AG04450 (cell line): ENCODE measurements at regions of chr15 and their contacts with region 1.

Region 1: DNA sequence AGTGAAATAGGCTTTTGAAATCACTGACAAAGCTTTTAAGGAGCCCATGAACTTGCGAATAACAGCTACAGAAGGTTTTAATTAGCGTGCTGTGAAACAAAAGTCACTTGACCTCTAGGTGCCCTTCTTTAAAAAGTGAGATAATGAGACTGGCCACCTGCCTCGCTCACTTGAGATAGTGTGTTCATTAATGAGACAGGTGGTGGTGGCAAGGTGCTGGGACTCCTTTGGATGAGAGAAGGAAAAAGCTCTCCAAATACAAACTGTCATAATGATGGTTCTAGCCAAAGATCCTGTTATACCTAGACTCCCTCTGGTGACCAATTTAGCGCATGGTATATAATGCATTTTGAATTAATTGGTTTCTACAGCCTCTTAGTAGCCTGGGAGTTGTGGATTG is 22.7 kb upstream of the IREB2 start:
- DNase-seq: no peak
- H3K4me3 ChIP-seq: no peak overlapping the region
- H3K27ac ChIP-seq: no peak overlapping the region
- H3K27me3 ChIP-seq: peaks cover 29% of the 10 kb centered on the region
- CTCF ChIP-seq: peak; percentile 48

Region 2: DNA sequence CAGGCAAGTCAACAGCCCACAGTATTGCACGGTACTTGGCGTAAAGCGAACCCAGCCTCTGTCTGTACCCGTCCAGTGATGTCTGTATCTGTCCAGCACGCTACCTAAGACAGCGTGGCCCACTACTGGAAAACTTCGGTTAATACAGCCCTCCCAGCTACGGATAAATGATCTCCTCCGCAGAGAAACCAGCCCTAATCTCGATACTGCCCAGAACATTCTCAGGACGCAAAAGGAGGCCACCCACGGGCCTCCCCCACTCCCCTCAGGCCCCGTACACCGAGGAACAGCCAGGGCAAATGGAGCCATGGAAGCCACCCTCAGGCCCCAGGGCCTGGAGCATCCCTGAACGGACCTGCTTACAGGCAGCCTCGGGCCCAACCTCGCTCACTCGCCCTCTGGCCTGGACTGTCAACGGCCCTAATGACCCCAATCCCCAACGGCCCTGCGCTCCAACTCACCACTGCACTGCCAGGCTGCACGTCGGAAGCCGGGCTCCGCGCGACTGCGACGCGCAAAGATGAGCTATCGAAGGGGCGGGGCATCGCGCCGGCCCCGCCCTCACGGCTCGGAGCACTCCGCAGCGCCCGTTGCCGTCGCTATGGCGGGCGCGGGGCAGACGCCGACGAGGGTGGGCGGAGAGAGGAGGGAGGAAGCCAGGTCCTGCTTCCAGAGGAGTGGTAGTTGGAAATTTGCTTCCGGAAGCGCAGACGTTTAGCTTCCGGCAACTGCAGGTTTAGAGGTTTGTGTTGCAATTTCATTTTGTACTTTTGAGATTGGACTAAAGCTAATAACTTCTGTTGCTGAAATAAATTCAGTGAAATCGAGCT is 116.0 kb before region 1 on chr15 and contains the start of gene SKIC8:
- CTCF ChIA-PET with region 1: interaction called, 112 read pairs
- POLR2A ChIA-PET with region 1: interaction called, 6 read pairs
- DNase-seq: peak; percentile 72
- H3K4me3 ChIP-seq: peak within 1 kb of the TSS; percentile 100
- H3K27ac ChIP-seq: peak within 1 kb of the TSS; percentile 66
- H3K27me3 ChIP-seq: no peaks in the 10 kb centered on the region
- CTCF ChIP-seq: no peak
- polyA plus RNA-seq, gene SKIC8: 78.1 and 92.0 TPM in 2 replicates

Region 3: GRCh38 chr15:78308422-78309032 is 106.8 kb before region 1 on chr15:
- CTCF ChIA-PET with region 1: interaction called, 112 read pairs
- POLR2A ChIA-PET with region 1: no interaction called
- DNase-seq: peak; percentile 33
- H3K4me3 ChIP-seq: no peak overlapping the region
- H3K27ac ChIP-seq: no peak overlapping the region
- H3K27me3 ChIP-seq: peaks cover 7% of the 10 kb centered on the region
- CTCF ChIP-seq: peak; percentile 95